Activated CD4-positive, alpha-beta T cell treated with anti-CD3 and anti-CD28 coated beads, Interleukin-2, amount 10 ng/mL, durations not matched to agents 24 days and 14 days (primary cell): ENCODE measurements at regions of chr2 and their contacts with region 1.

Region 1: DNA sequence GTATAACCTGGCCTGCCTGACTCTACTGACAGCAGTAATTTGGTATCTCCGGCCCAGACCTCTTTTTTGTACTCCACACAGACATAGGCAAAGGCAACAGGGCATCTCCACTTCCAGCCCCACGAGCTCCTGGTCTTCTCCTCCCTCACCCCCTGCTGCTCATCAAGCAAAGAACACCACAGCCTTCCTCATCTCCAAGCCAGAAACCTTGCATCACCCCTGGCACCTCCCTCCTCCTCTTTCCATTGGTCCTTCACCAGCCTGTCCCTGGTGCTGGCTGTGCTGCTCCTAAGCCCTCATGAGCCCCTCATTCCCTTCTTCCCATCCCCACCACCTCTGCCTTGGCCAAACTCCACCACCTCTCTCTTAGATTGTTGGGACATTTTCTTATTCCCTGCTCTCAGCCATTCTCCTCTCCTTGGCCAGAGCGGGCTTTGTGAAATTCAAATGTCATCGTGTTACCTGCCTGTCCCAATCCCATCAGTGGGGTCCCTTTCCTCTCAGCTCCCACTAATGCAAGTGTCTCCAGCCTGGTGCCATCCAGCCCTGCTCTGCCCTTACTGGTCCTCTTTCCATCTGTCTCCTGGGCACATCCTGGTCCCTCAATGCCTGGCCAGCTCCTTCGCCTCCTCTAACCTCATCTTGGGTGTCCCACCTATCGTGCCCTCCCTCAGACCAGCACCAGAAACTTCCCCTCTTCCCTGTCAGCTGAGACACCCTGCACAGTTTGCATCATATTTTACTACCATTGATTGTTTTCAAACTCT is 77.4 kb downstream of the INHBB start:
- DNase-seq: no peak
- H3K4me3 Mint-ChIP-seq: no peak overlapping the region
- H3K27ac Mint-ChIP-seq: no peak overlapping the region
- H3K4me1 Mint-ChIP-seq: no peaks in the 10 kb centered on the region
- H3K27me3 Mint-ChIP-seq: peaks cover 14% of the 10 kb centered on the region

Region 2: DNA sequence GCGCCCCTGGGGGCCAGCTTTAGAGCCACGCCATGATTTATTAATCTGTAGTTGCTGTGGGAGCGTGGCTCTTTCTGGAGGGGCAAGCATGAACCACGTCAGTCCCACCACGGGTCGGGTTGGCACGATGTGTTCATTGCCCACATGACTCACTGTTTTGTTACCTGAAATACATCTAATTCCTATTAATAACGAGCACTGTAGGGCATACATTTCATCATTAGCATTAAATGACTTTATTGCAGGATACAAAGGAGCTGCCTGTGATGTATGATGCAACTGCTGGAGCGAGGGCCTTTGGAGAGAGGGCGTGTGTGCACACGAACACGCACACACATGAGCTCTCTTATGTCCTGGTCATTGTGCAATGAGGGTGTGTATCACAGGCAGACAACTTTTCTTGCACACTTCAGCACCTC is 49.5 kb after region 1 on chr2:
- intact Hi-C with region 1: no loop called
- DNase-seq: no peak
- H3K4me3 Mint-ChIP-seq: no peak overlapping the region
- H3K27ac Mint-ChIP-seq: no peak overlapping the region
- H3K4me1 Mint-ChIP-seq: no peaks in the 10 kb centered on the region
- H3K27me3 Mint-ChIP-seq: no peaks in the 10 kb centered on the region

Region 3: DNA sequence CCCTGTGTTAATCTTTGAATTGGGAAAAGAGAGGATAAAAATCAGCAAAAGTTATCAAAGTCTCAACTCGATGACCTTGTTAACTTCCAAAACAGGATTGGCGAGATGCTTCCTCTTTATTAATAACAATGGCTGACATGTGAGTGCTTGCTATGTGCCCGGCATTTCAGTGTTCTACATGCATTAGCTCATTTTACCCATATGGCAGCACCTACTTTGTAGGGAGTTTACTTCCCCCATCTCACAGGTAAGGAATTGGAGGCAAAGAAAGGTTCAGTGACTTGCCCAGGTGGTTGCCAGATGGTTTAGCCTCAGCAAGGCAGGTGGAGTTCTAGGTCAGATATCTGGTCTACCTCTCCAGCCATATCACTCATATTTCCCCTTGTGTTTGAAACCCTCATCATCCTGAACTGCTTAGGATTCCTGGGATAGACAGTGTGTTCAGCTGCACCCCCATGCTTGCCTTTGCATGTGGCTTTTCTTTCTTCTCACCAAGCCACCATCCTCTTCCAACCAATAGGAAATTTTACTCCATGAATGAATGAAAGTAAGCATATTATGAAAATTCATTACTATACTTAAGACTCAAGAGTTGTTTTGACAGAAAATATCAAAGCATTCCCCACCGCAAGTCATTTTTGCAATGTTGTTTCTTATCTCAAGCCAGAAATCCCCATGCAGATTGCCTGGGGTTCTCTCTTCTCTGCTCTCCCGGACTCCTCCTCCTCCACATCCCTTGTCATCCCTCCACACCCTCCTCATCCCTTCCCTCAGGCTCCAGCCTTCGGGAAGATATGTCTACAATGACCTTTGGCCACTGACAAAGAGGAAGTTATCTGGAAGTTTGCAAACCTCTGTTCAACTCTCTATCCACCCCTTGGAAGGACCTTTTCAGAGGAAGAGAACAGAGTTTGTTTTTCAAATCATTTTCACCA is 849.5 kb after region 1 on chr2:
- intact Hi-C with region 1: loop called (anchors 5 kb)
- DNase-seq: no peak
- H3K4me3 Mint-ChIP-seq: no peak overlapping the region
- H3K27ac Mint-ChIP-seq: no peak overlapping the region
- H3K4me1 Mint-ChIP-seq: no peaks in the 10 kb centered on the region
- H3K27me3 Mint-ChIP-seq: peaks cover 11% of the 10 kb centered on the region